Heart left ventricle (tissue), 16 donors: ENCODE measurements at regions of chrX and their contacts with region 1.

Region 1: GRCh38 chrX:16445166-16445752 is 204.7 kb upstream of the S100G start:
- DNase-seq: no peak
- ATAC-seq: peak in 1 of 4 donors; percentile 49
- H3K4me3 ChIP-seq: no peak overlapping the region
- H3K27ac ChIP-seq: no peak overlapping the region
- H3K4me1 ChIP-seq: no peaks in the 10 kb centered on the region
- H3K27me3 ChIP-seq: peaks cover 0 to 17% (median 0%) of the 10 kb centered on the region in 9 donors
- CTCF ChIP-seq: peak; percentile 35 to 69 (median 52)
- POLR2A ChIP-seq: no peak

Region 2: GRCh38 chrX:15694941-15695451 is 750.3 kb before region 1 on chrX:
- intact Hi-C with region 1: loop called in 1 of 10 experiments (anchors 10 kb)
- DNase-seq: peak in 3 of 5 donors; percentile 20 to 58 (median 56)
- ATAC-seq: peak; percentile 92 to 95 (median 94)
- H3K4me3 ChIP-seq: no peak overlapping the region
- H3K27ac ChIP-seq: peak overlapping the region in 11 of 12 donors; percentile 31 to 86 (median 71)
- H3K4me1 ChIP-seq: peaks cover 0 to 9% (median 0%) of the 10 kb centered on the region in 12 donors
- H3K27me3 ChIP-seq: no peaks in the 10 kb centered on the region
- CTCF ChIP-seq: no peak
- POLR2A ChIP-seq: no peak

Region 3: DNA sequence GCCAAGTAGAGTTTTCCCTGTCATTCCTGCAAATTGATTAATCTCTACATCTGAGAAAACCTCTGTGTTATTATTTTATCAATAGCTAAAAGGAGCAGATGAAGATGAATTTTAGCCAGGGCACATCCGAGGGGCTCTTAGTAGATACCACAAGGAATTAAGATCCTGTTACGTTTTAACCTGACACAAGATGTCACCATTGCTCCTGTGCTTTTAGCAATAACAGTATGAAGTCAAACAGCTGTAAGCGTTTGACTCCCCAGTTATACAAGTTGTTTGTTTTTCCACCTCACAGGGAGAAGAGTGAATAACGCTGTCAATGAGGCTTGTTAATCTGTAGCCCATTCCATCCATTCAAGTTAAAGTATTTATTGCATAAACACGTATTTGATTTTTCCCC is 514.7 kb before region 1 on chrX:
- intact Hi-C with region 1: loop called in 1 of 10 experiments (anchors 5 kb)
- DNase-seq: no peak
- ATAC-seq: no peak
- H3K4me3 ChIP-seq: no peak overlapping the region
- H3K27ac ChIP-seq: no peak overlapping the region
- H3K4me1 ChIP-seq: peaks cover 0 to 4% (median 0%) of the 10 kb centered on the region in 12 donors
- H3K27me3 ChIP-seq: peaks cover 0 to 71% (median 0%) of the 10 kb centered on the region in 9 donors
- CTCF ChIP-seq: peak in 6 of 12 donors; percentile 20 to 49 (median 34)
- POLR2A ChIP-seq: no peak